Heart left ventricle (tissue), 16 donors: ENCODE measurements at regions of chr21 and their contacts with region 1.

Region 1: GRCh38 chr21:41167348-41168342 is at the start of gene BACE2:
- DNase-seq: peak; percentile 85 to 88 (median 87)
- ATAC-seq: peak; percentile 58 to 91 (median 86)
- H3K4me3 ChIP-seq: peak within 1 kb of the TSS; percentile 64 to 98 (median 76)
- H3K27ac ChIP-seq: peak within 1 kb of the TSS; percentile 81 to 98 (median 90)
- H3K4me1 ChIP-seq: peaks cover 0 to 41% (median 20%) of the 10 kb centered on the region in 12 donors
- H3K27me3 ChIP-seq: peaks cover 0 to 15% (median 0%) of the 10 kb centered on the region in 9 donors
- CTCF ChIP-seq: peak; percentile 32 to 87 (median 66)
- POLR2A ChIP-seq: peak in 1 of 2 donors; percentile 33
- total RNA-seq, gene BACE2: 10.3 to 30.3 (median 15.6) TPM

Region 2: GRCh38 chr21:40018871-40019475 is 1148.7 kb before region 1 on chr21:
- intact Hi-C with region 1: no loop called
- DNase-seq: no peak
- ATAC-seq: no peak
- H3K4me3 ChIP-seq: no peak overlapping the region
- H3K27ac ChIP-seq: no peak overlapping the region
- H3K4me1 ChIP-seq: no peaks in the 10 kb centered on the region
- H3K27me3 ChIP-seq: peaks cover 0 to 3% (median 0%) of the 10 kb centered on the region in 9 donors
- CTCF ChIP-seq: no peak
- POLR2A ChIP-seq: no peak

Region 3: GRCh38 chr21:41133896-41134522 is 33.6 kb before region 1 on chr21:
- intact Hi-C with region 1: no loop called
- DNase-seq: no peak
- ATAC-seq: peak in 2 of 4 donors; percentile 43 to 44
- H3K4me3 ChIP-seq: no peak overlapping the region
- H3K27ac ChIP-seq: no peak overlapping the region
- H3K4me1 ChIP-seq: no peaks in the 10 kb centered on the region
- H3K27me3 ChIP-seq: peaks cover 0 to 6% (median 0%) of the 10 kb centered on the region in 9 donors
- CTCF ChIP-seq: peak; percentile 20 to 64 (median 48)
- POLR2A ChIP-seq: no peak

Region 4: DNA sequence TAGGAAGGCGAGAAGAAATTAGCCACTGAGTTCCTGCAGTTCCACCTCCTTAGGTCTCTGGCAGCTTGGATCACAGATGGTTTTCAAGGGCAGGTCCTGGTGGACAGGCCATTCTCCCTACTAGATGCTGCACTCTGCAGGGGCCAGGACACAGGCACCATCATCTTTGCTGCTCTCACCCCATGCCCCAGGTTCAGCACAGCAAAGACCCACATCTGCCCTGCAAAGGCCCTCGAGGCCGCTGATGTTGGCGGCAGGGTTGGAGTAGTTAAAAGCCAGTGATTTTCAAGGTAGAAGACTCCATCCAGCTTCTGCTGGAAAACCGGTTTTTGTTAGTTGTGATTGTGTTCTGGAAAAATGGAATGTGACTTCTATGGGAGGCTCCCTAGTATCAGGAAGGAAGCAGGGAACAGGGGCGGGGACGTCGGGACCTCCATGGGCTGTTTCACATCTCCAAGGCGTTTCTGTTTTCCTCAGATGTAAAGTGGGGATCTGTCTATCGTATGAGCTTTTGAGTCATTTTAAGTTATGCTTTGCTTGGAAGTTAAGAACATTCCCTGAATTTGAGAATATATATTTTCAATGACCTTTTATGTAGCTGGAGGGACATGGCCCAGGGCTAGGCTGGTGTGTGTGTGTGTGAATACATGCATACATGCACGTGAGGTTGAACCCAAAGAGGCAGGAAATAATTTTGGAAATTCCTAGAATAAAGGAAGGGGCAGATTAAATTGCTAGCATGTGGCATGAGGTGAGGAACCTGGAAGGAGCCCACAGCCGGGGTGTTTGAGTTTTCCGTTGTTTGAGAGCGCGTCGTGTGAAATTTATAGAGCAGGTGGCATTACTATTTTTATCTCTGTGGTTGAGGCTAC is 47.9 kb after region 1 on chr21:
- intact Hi-C with region 1: loop called in 1 of 10 experiments (anchors 1 kb)
- DNase-seq: no peak
- ATAC-seq: no peak
- H3K4me3 ChIP-seq: no peak overlapping the region
- H3K27ac ChIP-seq: no peak overlapping the region
- H3K4me1 ChIP-seq: peaks cover 0 to 21% (median 1%) of the 10 kb centered on the region in 12 donors
- H3K27me3 ChIP-seq: no peaks in the 10 kb centered on the region
- CTCF ChIP-seq: no peak
- POLR2A ChIP-seq: no peak

Region 5: GRCh38 chr21:41247561-41248284 is 80.1 kb after region 1 on chr21:
- intact Hi-C with region 1: loop called in 1 of 10 experiments (anchors 10 kb)
- DNase-seq: peak in 3 of 5 donors; percentile 23 to 49 (median 31)
- ATAC-seq: peak; percentile 56 to 87 (median 74)
- H3K4me3 ChIP-seq: peak overlapping the region in 1 of 12 donors; percentile 5
- H3K27ac ChIP-seq: peak overlapping the region in 2 of 12 donors; percentile 50 to 76
- H3K4me1 ChIP-seq: peaks cover 0 to 13% (median 0%) of the 10 kb centered on the region in 12 donors
- H3K27me3 ChIP-seq: no peaks in the 10 kb centered on the region
- CTCF ChIP-seq: no peak
- POLR2A ChIP-seq: no peak

Region 6: GRCh38 chr21:41289426-41289825 is 121.8 kb after region 1 on chr21:
- intact Hi-C with region 1: no loop called
- DNase-seq: no peak
- ATAC-seq: no peak
- H3K4me3 ChIP-seq: no peak overlapping the region
- H3K27ac ChIP-seq: no peak overlapping the region
- H3K4me1 ChIP-seq: no peaks in the 10 kb centered on the region
- H3K27me3 ChIP-seq: peaks cover 0 to 41% (median 16%) of the 10 kb centered on the region in 9 donors
- CTCF ChIP-seq: no peak
- POLR2A ChIP-seq: no peak

Region 7: GRCh38 chr21:41361786-41362604 is 194.3 kb after region 1 on chr21 and contains the start of gene MX2:
- intact Hi-C with region 1: loop called in 2 of 10 experiments (anchors 10 kb)
- DNase-seq: peak; percentile 79 to 84 (median 81)
- ATAC-seq: peak; percentile 85 to 94 (median 88)
- H3K4me3 ChIP-seq: peak within 1 kb of the TSS; percentile 16 to 70 (median 55)
- H3K27ac ChIP-seq: peak within 1 kb of the TSS; percentile 80 to 98 (median 94)
- H3K4me1 ChIP-seq: peaks cover 0 to 43% (median 16%) of the 10 kb centered on the region in 12 donors
- H3K27me3 ChIP-seq: peaks cover 0 to 4% (median 0%) of the 10 kb centered on the region in 9 donors
- CTCF ChIP-seq: no peak
- POLR2A ChIP-seq: no peak
- total RNA-seq, gene MX2: 4.2 to 23.3 (median 6.0) TPM